ENCODE measurements at regions of chr1 and their contacts with region 1.

Region 1: GRCh38 chr1:6393400-6394187 is at the start of gene ACOT7:
- DNase-seq: peak; percentile 71 to 77
- ATAC-seq: peak; percentile 97
- H3K4me3 ChIP-seq: peak within 1 kb of the TSS; percentile 61 to 82 (median 66)
- H3K27ac ChIP-seq: peak within 1 kb of the TSS; percentile 87 to 98 (median 94)
- H3K4me1 ChIP-seq: peaks cover 7 to 8% of the 10 kb centered on the region in 2 donors
- H3K27me3 ChIP-seq: no peaks in the 10 kb centered on the region
- CTCF ChIP-seq: peak in 1 of 5 experiments; percentile 26
- POLR2A ChIP-seq: peak; percentile 60 to 78
- total RNA-seq, gene ACOT7: 1.3 to 5.8 (median 3.2) TPM

Region 2: GRCh38 chr1:6350416-6351088 is 43.0 kb before region 1 on chr1:
- in situ Hi-C with region 1: no loop called
- intact Hi-C with region 1: loop called (anchors 5 kb)
- DNase-seq: no peak
- ATAC-seq: no peak
- H3K4me3 ChIP-seq: no peak overlapping the region
- H3K27ac ChIP-seq: no peak overlapping the region
- H3K4me1 ChIP-seq: peaks cover 30 to 33% of the 10 kb centered on the region in 2 donors
- H3K27me3 ChIP-seq: no peaks in the 10 kb centered on the region
- CTCF ChIP-seq: no peak
- POLR2A ChIP-seq: no peak

Region 3: GRCh38 chr1:6454856-6455751 is 61.5 kb after region 1 on chr1:
- in situ Hi-C with region 1: no loop called
- intact Hi-C with region 1: no loop called
- DNase-seq: no peak
- ATAC-seq: no peak
- H3K4me3 ChIP-seq: no peak overlapping the region
- H3K27ac ChIP-seq: no peak overlapping the region
- H3K4me1 ChIP-seq: peaks cover 0 to 2% of the 10 kb centered on the region in 2 donors
- H3K27me3 ChIP-seq: peaks cover 70 to 75% (median 73%) of the 10 kb centered on the region in 3 donors
- CTCF ChIP-seq: no peak
- POLR2A ChIP-seq: no peak